ENCODE measurements at regions of chr1 and their contacts with region 1.

Region 1: GRCh38 chr1:222455188-222455879 is 92.6 kb downstream of the HHIPL2 start:
- DNase-seq: peak; percentile 72 to 92 (median 82)
- ATAC-seq: peak; percentile 100
- H3K4me3 ChIP-seq: no peak overlapping the region
- H3K4me3 Mint-ChIP-seq: peak overlapping the region; percentile 4
- H3K27ac ChIP-seq: no peak overlapping the region
- H3K27ac Mint-ChIP-seq: no peak overlapping the region
- H3K4me1 ChIP-seq: peaks cover 14% of the 10 kb centered on the region
- H3K4me1 Mint-ChIP-seq: peaks cover 17% of the 10 kb centered on the region
- H3K27me3 ChIP-seq: no peaks in the 10 kb centered on the region
- H3K27me3 Mint-ChIP-seq: no peaks in the 10 kb centered on the region
- CTCF ChIP-seq: peak; percentile 93

Region 2: GRCh38 chr1:220810179-220810653 is 1645.1 kb before region 1 on chr1:
- CTCF ChIA-PET with region 1: no interaction called
- POLR2A ChIA-PET with region 1: no interaction called
- intact Hi-C with region 1: loop called (anchors 1 to 2 kb)
- DNase-seq: peak; percentile 48 to 84 (median 60)
- ATAC-seq: peak; percentile 97
- H3K4me3 ChIP-seq: peak overlapping the region; percentile 23
- H3K4me3 Mint-ChIP-seq: peak overlapping the region; percentile 71
- H3K27ac ChIP-seq: no peak overlapping the region
- H3K27ac Mint-ChIP-seq: no peak overlapping the region
- H3K4me1 ChIP-seq: peaks cover 6% of the 10 kb centered on the region
- H3K4me1 Mint-ChIP-seq: peaks cover 10% of the 10 kb centered on the region
- H3K27me3 ChIP-seq: peaks cover 0 to 6% of the 10 kb centered on the region in 2 experiments
- H3K27me3 Mint-ChIP-seq: peaks cover 58% of the 10 kb centered on the region
- CTCF ChIP-seq: peak; percentile 96

Region 3: GRCh38 chr1:221478050-221478949 is 977.0 kb before region 1 on chr1:
- CTCF ChIA-PET with region 1: interaction called, 12 read pairs
- POLR2A ChIA-PET with region 1: no interaction called
- intact Hi-C with region 1: loop called (anchors 1 to 2 kb)
- DNase-seq: peak; percentile 16 to 71 (median 50)
- ATAC-seq: peak; percentile 79
- H3K4me3 ChIP-seq: no peak overlapping the region
- H3K4me3 Mint-ChIP-seq: no peak overlapping the region
- H3K27ac ChIP-seq: no peak overlapping the region
- H3K27ac Mint-ChIP-seq: no peak overlapping the region
- H3K4me1 ChIP-seq: peaks cover 4% of the 10 kb centered on the region
- H3K4me1 Mint-ChIP-seq: no peaks in the 10 kb centered on the region
- H3K27me3 ChIP-seq: no peaks in the 10 kb centered on the region
- H3K27me3 Mint-ChIP-seq: peaks cover 5% of the 10 kb centered on the region
- CTCF ChIP-seq: peak; percentile 76

Region 4: DNA sequence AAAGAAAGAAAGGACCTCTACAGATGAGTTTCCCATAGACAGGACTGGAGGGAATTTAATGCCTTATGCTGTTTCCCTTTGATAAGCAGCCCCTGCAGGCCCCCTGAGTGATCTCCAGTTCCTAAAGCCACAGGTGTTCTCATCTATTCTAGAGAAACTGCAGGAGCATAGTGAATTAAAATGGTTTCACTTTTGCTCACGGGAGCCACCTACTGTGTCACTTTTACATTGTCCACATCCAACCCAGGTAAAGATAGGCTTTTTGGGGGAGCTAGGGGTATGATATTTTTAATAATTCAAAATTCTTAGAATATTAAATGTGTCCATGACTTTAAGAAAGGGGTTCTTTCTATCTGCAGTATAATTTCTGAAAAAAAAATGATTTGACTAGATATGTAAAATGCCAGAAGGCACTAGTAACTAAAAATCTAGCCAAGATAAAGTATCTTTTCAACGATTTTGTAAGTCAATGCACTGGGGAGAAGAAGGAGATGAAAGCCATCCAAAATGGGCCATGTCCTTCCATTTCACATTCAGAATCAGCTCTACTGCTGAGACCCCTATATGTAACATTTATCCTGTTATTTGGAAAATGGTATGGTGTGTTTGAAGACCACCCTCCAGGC is 446.1 kb before region 1 on chr1:
- CTCF ChIA-PET with region 1: no interaction called
- POLR2A ChIA-PET with region 1: no interaction called
- intact Hi-C with region 1: loop called in 1 of 2 experiments (anchors 10 kb)
- DNase-seq: peak in 10 of 14 experiments; percentile 2 to 58 (median 14)
- ATAC-seq: no peak
- H3K4me3 ChIP-seq: no peak overlapping the region
- H3K4me3 Mint-ChIP-seq: no peak overlapping the region
- H3K27ac ChIP-seq: no peak overlapping the region
- H3K27ac Mint-ChIP-seq: no peak overlapping the region
- H3K4me1 ChIP-seq: no peaks in the 10 kb centered on the region
- H3K4me1 Mint-ChIP-seq: no peaks in the 10 kb centered on the region
- H3K27me3 ChIP-seq: no peaks in the 10 kb centered on the region
- H3K27me3 Mint-ChIP-seq: peaks cover 4% of the 10 kb centered on the region
- CTCF ChIP-seq: peak; percentile 40

Region 5: GRCh38 chr1:222420633-222421032 is 34.7 kb before region 1 on chr1:
- CTCF ChIA-PET with region 1: interaction called, 4 read pairs
- POLR2A ChIA-PET with region 1: interaction called, 15 read pairs
- intact Hi-C with region 1: loop called in 1 of 2 experiments (anchors 5 kb)
- DNase-seq: peak in 12 of 14 experiments; percentile 11 to 86 (median 43)
- ATAC-seq: peak; percentile 97
- H3K4me3 ChIP-seq: no peak overlapping the region
- H3K4me3 Mint-ChIP-seq: peak overlapping the region; percentile 63
- H3K27ac ChIP-seq: peak overlapping the region; percentile 40 to 54
- H3K27ac Mint-ChIP-seq: peak overlapping the region; percentile 86
- H3K4me1 ChIP-seq: peaks cover 48% of the 10 kb centered on the region
- H3K4me1 Mint-ChIP-seq: peaks cover 73% of the 10 kb centered on the region
- H3K27me3 ChIP-seq: no peaks in the 10 kb centered on the region
- H3K27me3 Mint-ChIP-seq: no peaks in the 10 kb centered on the region
- CTCF ChIP-seq: no peak